Activated CD4-positive, alpha-beta T cell treated with anti-CD3 and anti-CD28 coated beads, Interleukin-2, amount 10 ng/mL, durations not matched to agents 24 days and 14 days (primary cell): ENCODE measurements at regions of chr11 and their contacts with region 1.

Region 1: GRCh38 chr11:117020287-117020686 is 77.9 kb downstream of the SIK3 start:
- DNase-seq: peak; percentile 56
- H3K4me3 Mint-ChIP-seq: peak overlapping the region; percentile 18
- H3K27ac Mint-ChIP-seq: peak overlapping the region; percentile 66
- H3K4me1 Mint-ChIP-seq: peaks cover 49% of the 10 kb centered on the region
- H3K27me3 Mint-ChIP-seq: no peaks in the 10 kb centered on the region

Region 2: GRCh38 chr11:116930177-116930576 is 90.1 kb before region 1 on chr11:
- intact Hi-C with region 1: loop called (anchors 2 kb)
- DNase-seq: peak; percentile 86
- H3K4me3 Mint-ChIP-seq: peak overlapping the region; percentile 88
- H3K27ac Mint-ChIP-seq: peak overlapping the region; percentile 89
- H3K4me1 Mint-ChIP-seq: peaks cover 55% of the 10 kb centered on the region
- H3K27me3 Mint-ChIP-seq: no peaks in the 10 kb centered on the region

Region 3: GRCh38 chr11:117002639-117003299 is 17.5 kb before region 1 on chr11:
- intact Hi-C with region 1: loop called (anchors 2 kb)
- DNase-seq: peak; percentile 69
- H3K4me3 Mint-ChIP-seq: no peak overlapping the region
- H3K27ac Mint-ChIP-seq: peak overlapping the region; percentile 76
- H3K4me1 Mint-ChIP-seq: peaks cover 38% of the 10 kb centered on the region
- H3K27me3 Mint-ChIP-seq: no peaks in the 10 kb centered on the region

Region 4: GRCh38 chr11:117045196-117045595 is 24.9 kb after region 1 on chr11:
- intact Hi-C with region 1: no loop called
- DNase-seq: peak; percentile 35
- H3K4me3 Mint-ChIP-seq: no peak overlapping the region
- H3K27ac Mint-ChIP-seq: no peak overlapping the region
- H3K4me1 Mint-ChIP-seq: peaks cover 27% of the 10 kb centered on the region
- H3K27me3 Mint-ChIP-seq: no peaks in the 10 kb centered on the region